ENCODE measurements at regions of chr20 and their contacts with region 1.

Region 1: DNA sequence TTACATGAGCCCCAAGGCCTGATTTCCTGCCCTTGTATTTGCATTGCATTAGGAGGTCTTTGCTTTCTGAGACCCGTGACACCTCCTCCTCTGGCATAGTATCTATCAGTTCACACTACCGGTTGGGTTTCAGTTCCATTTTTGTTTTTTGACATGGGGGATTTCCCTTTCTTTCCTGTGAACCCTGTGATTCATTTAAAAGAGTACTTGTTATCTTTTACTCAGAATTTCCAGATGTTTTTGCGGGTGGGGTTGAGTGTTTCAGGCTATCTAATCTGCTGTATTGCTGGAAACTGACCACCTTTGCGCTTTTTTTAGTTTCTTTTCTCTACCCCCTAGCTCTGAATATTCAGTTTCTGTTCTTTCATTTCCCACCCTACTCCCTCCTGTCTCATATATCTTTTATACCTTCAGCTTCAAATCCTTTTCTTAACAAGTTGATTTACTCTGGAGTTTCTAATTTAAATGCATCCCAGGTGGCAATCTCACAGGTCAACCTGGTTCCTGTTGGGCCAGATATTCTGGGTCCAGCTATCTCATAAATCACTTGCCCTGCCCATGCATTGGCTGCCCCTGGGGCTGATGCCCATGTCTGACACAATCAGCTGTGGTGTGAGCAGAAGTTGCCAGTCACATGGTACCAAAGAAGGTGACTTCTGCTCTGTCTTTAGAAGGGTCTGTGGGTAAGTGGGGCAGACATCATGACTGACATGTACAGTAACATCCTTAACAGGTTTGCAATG is 14.3 kb upstream of the NCOA3 start:
- DNase-seq: peak; percentile 55
- ATAC-seq: peak; percentile 90
- H3K4me3 Mint-ChIP-seq: peak overlapping the region; percentile 63
- H3K27ac Mint-ChIP-seq: peak overlapping the region; percentile 97
- H3K4me1 Mint-ChIP-seq: peaks cover 35% of the 10 kb centered on the region
- H3K27me3 Mint-ChIP-seq: no peaks in the 10 kb centered on the region

Region 2: GRCh38 chr20:47453142-47453782 is 34.1 kb before region 1 on chr20:
- POLR2A ChIA-PET with region 1: interaction called, 10 read pairs
- DNase-seq: peak; percentile 47
- ATAC-seq: peak; percentile 96
- H3K4me3 Mint-ChIP-seq: peak overlapping the region; percentile 66
- H3K27ac Mint-ChIP-seq: peak overlapping the region; percentile 89
- H3K4me1 Mint-ChIP-seq: peaks cover 30% of the 10 kb centered on the region
- H3K27me3 Mint-ChIP-seq: no peaks in the 10 kb centered on the region

Region 3: DNA sequence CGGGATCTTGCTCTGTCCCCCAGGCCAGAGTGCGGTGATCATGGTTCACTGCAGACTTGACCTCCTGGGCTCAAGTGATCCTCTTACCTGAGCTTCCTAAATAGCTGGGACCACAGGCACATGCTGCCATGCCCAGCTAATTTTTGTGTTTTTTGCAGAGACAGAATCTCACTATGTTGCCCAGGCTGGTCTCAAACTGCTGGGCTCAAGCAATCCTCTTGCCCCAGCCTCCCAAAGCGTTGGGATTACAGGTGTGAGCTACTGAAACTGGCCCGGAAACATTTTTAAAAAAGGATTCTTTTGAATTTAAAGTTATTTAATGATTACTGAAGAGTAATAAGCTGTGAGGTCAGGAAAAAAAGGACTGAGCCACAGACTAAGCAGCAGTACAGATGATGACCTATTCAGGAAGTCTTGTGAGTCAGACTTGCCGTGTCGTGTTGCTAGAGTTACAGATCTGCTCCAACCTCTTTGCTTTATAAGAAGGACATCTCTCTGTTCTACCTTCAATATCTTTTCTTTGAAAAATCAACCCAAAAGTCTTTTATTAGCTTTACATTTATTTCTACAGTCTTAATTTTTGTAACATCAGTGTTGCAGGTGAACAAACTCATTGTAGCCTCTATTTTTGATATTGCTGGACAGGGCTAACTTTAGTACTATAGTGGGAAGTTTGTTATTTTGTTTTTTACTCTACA is 123.0 kb after region 1 on chr20:
- POLR2A ChIA-PET with region 1: interaction called, 11 read pairs
- DNase-seq: no peak
- ATAC-seq: peak; percentile 88
- H3K4me3 Mint-ChIP-seq: peak overlapping the region; percentile 78
- H3K27ac Mint-ChIP-seq: peak overlapping the region; percentile 87
- H3K4me1 Mint-ChIP-seq: peaks cover 63% of the 10 kb centered on the region
- H3K27me3 Mint-ChIP-seq: no peaks in the 10 kb centered on the region